Activated CD4-positive, alpha-beta T cell treated with anti-CD3 and anti-CD28 coated beads, Interleukin-2, amount 10 ng/mL, durations not matched to agents 24 days and 14 days (primary cell): ENCODE measurements at regions of chr11 and their contacts with region 1.

Region 1: GRCh38 chr11:118198370-118198769 is 21.9 kb upstream of the SCN2B start:
- DNase-seq: peak; percentile 94
- H3K4me3 Mint-ChIP-seq: peak overlapping the region; percentile 62
- H3K27ac Mint-ChIP-seq: peak overlapping the region; percentile 82
- H3K4me1 Mint-ChIP-seq: peaks cover 21% of the 10 kb centered on the region
- H3K27me3 Mint-ChIP-seq: no peaks in the 10 kb centered on the region

Region 2: GRCh38 chr11:118109231-118109630 is 89.1 kb before region 1 on chr11:
- intact Hi-C with region 1: no loop called
- DNase-seq: no peak
- H3K4me3 Mint-ChIP-seq: no peak overlapping the region
- H3K27ac Mint-ChIP-seq: no peak overlapping the region
- H3K4me1 Mint-ChIP-seq: peaks cover 3% of the 10 kb centered on the region
- H3K27me3 Mint-ChIP-seq: peaks cover 12% of the 10 kb centered on the region

Region 3: GRCh38 chr11:118145285-118146227 is 52.8 kb before region 1 on chr11:
- intact Hi-C with region 1: no loop called
- DNase-seq: peak; percentile 97
- H3K4me3 Mint-ChIP-seq: peak overlapping the region; percentile 86
- H3K27ac Mint-ChIP-seq: peak overlapping the region; percentile 38
- H3K4me1 Mint-ChIP-seq: peaks cover 19% of the 10 kb centered on the region
- H3K27me3 Mint-ChIP-seq: peaks cover 73% of the 10 kb centered on the region

Region 4: GRCh38 chr11:118216621-118217481 is 18.5 kb after region 1 on chr11:
- intact Hi-C with region 1: loop called (anchors 1 kb)
- DNase-seq: peak; percentile 84
- H3K4me3 Mint-ChIP-seq: peak overlapping the region; percentile 86
- H3K27ac Mint-ChIP-seq: peak overlapping the region; percentile 100
- H3K4me1 Mint-ChIP-seq: peaks cover 87% of the 10 kb centered on the region
- H3K27me3 Mint-ChIP-seq: no peaks in the 10 kb centered on the region

Region 5: GRCh38 chr11:118224511-118225188 is 26.3 kb after region 1 on chr11 and contains the start of gene JAML:
- intact Hi-C with region 1: loop called (anchors 1 kb)
- DNase-seq: peak; percentile 92
- H3K4me3 Mint-ChIP-seq: peak within 1 kb of the TSS; percentile 91
- H3K27ac Mint-ChIP-seq: peak within 1 kb of the TSS; percentile 96
- H3K4me1 Mint-ChIP-seq: peaks cover 77% of the 10 kb centered on the region
- H3K27me3 Mint-ChIP-seq: no peaks in the 10 kb centered on the region
- total RNA-seq, gene JAML: 303 and 318 TPM in 2 replicates

Region 6: GRCh38 chr11:118232659-118233058 is 34.3 kb after region 1 on chr11:
- intact Hi-C with region 1: loop called (anchors 2 kb)
- DNase-seq: peak; percentile 64
- H3K4me3 Mint-ChIP-seq: peak overlapping the region; percentile 10
- H3K27ac Mint-ChIP-seq: no peak overlapping the region
- H3K4me1 Mint-ChIP-seq: peaks cover 53% of the 10 kb centered on the region
- H3K27me3 Mint-ChIP-seq: no peaks in the 10 kb centered on the region

Region 7: DNA sequence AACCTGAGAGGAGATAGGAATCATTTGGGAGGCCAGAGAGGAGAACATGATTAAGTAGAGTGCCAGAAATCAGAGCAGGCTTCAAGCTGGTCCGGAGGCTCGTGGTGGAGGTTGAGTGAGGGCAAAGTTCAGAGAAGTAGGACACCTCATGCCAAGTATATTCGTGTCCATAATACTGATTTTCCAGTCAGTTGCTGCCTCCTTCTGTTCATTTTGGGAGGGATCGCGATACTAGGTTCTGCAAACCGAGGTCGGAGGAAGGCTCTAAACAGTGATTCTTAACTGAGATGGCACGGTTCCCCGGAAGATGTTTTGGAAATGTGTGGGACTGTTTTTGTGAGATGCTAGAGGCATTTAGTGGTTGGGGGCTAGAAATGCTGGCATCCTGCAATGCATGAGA is 92.6 kb after region 1 on chr11:
- intact Hi-C with region 1: loop called (anchors 1 kb)
- DNase-seq: peak; percentile 87
- H3K4me3 Mint-ChIP-seq: no peak overlapping the region
- H3K27ac Mint-ChIP-seq: peak overlapping the region; percentile 1
- H3K4me1 Mint-ChIP-seq: peaks cover 23% of the 10 kb centered on the region
- H3K27me3 Mint-ChIP-seq: peaks cover 2% of the 10 kb centered on the region

Region 8: GRCh38 chr11:118338637-118339061 is 140.3 kb after region 1 on chr11:
- intact Hi-C with region 1: loop called (anchors 2 kb)
- DNase-seq: peak; percentile 97
- H3K4me3 Mint-ChIP-seq: peak overlapping the region; percentile 90
- H3K27ac Mint-ChIP-seq: peak overlapping the region; percentile 100
- H3K4me1 Mint-ChIP-seq: peaks cover 65% of the 10 kb centered on the region
- H3K27me3 Mint-ChIP-seq: no peaks in the 10 kb centered on the region

Region 9: DNA sequence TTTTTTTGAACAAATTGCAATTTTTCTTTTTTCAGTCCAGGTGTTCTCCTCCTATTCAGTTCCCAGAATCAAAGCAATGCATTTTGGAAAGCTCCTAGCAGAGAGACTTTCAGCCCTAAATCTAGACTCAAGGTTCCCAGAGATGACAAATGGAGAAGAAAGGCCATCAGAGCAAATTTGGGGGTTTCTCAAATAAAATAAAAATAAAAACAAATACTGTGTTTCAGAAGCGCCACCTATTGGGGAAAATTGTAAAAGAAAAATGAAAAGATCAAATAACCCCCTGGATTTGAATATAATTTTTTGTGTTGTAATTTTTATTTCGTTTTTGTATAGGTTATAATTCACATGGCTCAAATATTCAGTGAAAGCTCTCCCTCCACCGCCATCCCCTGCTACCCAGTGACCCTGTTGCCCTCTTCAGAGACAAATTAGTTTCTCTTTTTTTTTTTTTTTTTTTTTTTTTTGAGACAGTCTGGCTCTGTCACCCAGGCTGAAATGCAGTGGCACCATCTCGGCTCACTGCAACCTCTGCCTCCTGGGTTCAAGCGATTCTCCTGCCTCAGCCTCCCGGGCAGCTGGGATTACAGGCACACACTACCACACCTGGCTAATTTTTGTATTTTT is 154.8 kb after region 1 on chr11:
- intact Hi-C with region 1: loop called (anchors 1 kb)
- DNase-seq: no peak
- H3K4me3 Mint-ChIP-seq: no peak overlapping the region
- H3K27ac Mint-ChIP-seq: peak overlapping the region; percentile 29
- H3K4me1 Mint-ChIP-seq: peaks cover 13% of the 10 kb centered on the region
- H3K27me3 Mint-ChIP-seq: no peaks in the 10 kb centered on the region